CD8-positive, alpha-beta T cell (primary cell): ENCODE measurements at regions of chr1 and their contacts with region 1.

Region 1: GRCh38 chr1:29033829-29034466 is 89.8 kb downstream of the TMEM200B start:
- DNase-seq: peak in 2 of 9 experiments; percentile 47 to 65
- ATAC-seq: peak; percentile 71
- H3K4me3 ChIP-seq: no peak overlapping the region
- H3K4me3 Mint-ChIP-seq: no peak overlapping the region
- H3K27ac ChIP-seq: no peak overlapping the region
- H3K27ac Mint-ChIP-seq: no peak overlapping the region
- H3K4me1 ChIP-seq: no peaks in the 10 kb centered on the region
- H3K4me1 Mint-ChIP-seq: peaks cover 2% of the 10 kb centered on the region
- H3K27me3 ChIP-seq: no peaks in the 10 kb centered on the region
- H3K27me3 Mint-ChIP-seq: no peaks in the 10 kb centered on the region
- CTCF ChIP-seq: peak; percentile 71

Region 2: GRCh38 chr1:28789412-28789811 is 244.5 kb before region 1 on chr1:
- CTCF ChIA-PET with region 1: no interaction called
- POLR2A ChIA-PET with region 1: no interaction called
- intact Hi-C with region 1: loop called (anchors 1 to 5 kb)
- DNase-seq: no peak
- ATAC-seq: no peak
- H3K4me3 ChIP-seq: no peak overlapping the region
- H3K4me3 Mint-ChIP-seq: no peak overlapping the region
- H3K27ac ChIP-seq: no peak overlapping the region
- H3K27ac Mint-ChIP-seq: no peak overlapping the region
- H3K4me1 ChIP-seq: no peaks in the 10 kb centered on the region
- H3K4me1 Mint-ChIP-seq: peaks cover 7% of the 10 kb centered on the region
- H3K27me3 ChIP-seq: no peaks in the 10 kb centered on the region
- H3K27me3 Mint-ChIP-seq: peaks cover 7% of the 10 kb centered on the region
- CTCF ChIP-seq: no peak

Region 3: DNA sequence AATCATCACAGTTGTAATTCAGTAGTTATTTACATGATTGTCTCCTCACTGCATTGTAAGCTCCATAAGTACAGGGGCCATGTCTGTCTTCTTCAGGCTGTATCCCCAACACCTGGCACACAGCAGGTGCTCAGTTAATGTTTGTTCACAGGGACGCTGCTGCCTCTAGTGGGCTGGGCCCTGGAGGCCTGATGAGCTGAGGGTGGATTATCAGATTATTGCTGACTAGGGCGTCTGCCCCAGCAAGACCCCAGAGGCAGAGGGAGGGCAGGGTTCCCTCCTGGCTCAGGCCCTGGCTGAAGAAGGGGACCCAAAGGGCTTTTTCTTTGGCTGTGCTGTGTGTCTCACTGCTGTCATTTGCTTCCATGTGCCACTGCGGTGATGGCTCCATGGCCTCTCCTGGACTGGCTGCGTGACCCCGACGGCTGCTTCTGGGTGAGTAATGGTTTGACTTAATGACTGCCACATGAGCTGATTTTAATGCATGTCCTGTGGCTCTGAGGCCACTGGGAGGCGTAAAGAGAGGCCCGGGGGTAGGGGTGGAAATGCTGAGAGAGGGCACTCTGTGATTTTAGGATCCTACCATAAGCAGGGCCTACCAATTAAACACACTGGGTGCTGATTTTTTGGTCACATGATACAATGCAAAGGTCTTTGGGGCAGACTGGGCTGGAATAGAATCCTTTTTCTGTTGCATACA is 140.4 kb before region 1 on chr1:
- CTCF ChIA-PET with region 1: interaction called, 10 read pairs
- POLR2A ChIA-PET with region 1: no interaction called
- intact Hi-C with region 1: no loop called
- DNase-seq: peak in 4 of 9 experiments; percentile 32 to 43 (median 36)
- ATAC-seq: peak; percentile 73
- H3K4me3 ChIP-seq: no peak overlapping the region
- H3K4me3 Mint-ChIP-seq: no peak overlapping the region
- H3K27ac ChIP-seq: no peak overlapping the region
- H3K27ac Mint-ChIP-seq: no peak overlapping the region
- H3K4me1 ChIP-seq: no peaks in the 10 kb centered on the region
- H3K4me1 Mint-ChIP-seq: peaks cover 46% of the 10 kb centered on the region
- H3K27me3 ChIP-seq: no peaks in the 10 kb centered on the region
- H3K27me3 Mint-ChIP-seq: no peaks in the 10 kb centered on the region
- CTCF ChIP-seq: peak; percentile 29

Region 4: GRCh38 chr1:29011775-29012174 is 22.2 kb before region 1 on chr1:
- CTCF ChIA-PET with region 1: no interaction called
- POLR2A ChIA-PET with region 1: no interaction called
- intact Hi-C with region 1: no loop called
- DNase-seq: no peak
- ATAC-seq: no peak
- H3K4me3 ChIP-seq: no peak overlapping the region
- H3K4me3 Mint-ChIP-seq: no peak overlapping the region
- H3K27ac ChIP-seq: no peak overlapping the region
- H3K27ac Mint-ChIP-seq: peak overlapping the region; percentile 69
- H3K4me1 ChIP-seq: no peaks in the 10 kb centered on the region
- H3K4me1 Mint-ChIP-seq: peaks cover 18% of the 10 kb centered on the region
- H3K27me3 ChIP-seq: no peaks in the 10 kb centered on the region
- H3K27me3 Mint-ChIP-seq: no peaks in the 10 kb centered on the region
- CTCF ChIP-seq: no peak

Region 5: GRCh38 chr1:29171089-29171488 is 137.1 kb after region 1 on chr1:
- CTCF ChIA-PET with region 1: no interaction called
- POLR2A ChIA-PET with region 1: no interaction called
- intact Hi-C with region 1: no loop called
- DNase-seq: no peak
- ATAC-seq: no peak
- H3K4me3 ChIP-seq: no peak overlapping the region
- H3K4me3 Mint-ChIP-seq: peak overlapping the region; percentile 52
- H3K27ac ChIP-seq: no peak overlapping the region
- H3K27ac Mint-ChIP-seq: no peak overlapping the region
- H3K4me1 ChIP-seq: peaks cover 43% of the 10 kb centered on the region
- H3K4me1 Mint-ChIP-seq: peaks cover 67% of the 10 kb centered on the region
- H3K27me3 ChIP-seq: no peaks in the 10 kb centered on the region
- H3K27me3 Mint-ChIP-seq: no peaks in the 10 kb centered on the region
- CTCF ChIP-seq: no peak

Region 6: DNA sequence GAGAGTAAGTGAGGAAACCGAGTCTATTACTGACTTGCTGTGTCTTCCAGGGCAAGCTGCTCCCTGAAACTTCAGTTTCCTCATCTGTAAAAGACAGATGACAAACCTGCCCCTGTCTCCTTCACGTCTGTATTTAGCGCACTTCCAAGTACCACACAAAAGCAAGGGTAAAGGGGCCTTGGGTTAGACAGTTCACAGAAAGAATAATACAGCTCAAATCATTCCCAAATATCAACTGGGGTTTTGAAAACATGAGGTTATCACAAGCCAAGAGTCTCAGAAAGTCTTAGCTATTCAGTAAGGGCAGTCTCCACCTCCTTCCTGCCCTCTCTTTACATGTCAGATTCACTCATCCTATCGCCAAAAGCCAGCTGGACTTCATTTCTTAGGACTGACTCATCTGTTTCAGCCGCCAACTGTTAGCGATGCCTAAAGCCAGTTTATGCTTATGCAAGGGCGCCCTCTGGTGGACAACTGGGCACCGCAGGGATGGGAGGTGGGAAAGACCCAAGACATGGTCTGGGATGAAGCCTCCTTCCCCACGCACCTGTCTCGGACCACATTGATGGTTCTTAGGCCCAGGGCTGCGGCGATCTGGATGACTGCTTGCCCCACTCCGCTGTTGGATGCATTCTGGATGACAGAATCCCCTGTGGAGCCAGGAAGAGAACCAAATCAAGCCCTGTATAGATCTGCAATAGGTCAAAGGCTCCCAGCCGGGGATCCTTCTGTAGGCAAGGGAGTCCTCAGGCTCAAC is 168.8 kb after region 1 on chr1:
- CTCF ChIA-PET with region 1: interaction called, 11 read pairs
- POLR2A ChIA-PET with region 1: no interaction called
- intact Hi-C with region 1: loop called (anchors 5 kb)
- DNase-seq: peak; percentile 67 to 95 (median 87)
- ATAC-seq: peak; percentile 84
- H3K4me3 ChIP-seq: no peak overlapping the region
- H3K4me3 Mint-ChIP-seq: no peak overlapping the region
- H3K27ac ChIP-seq: no peak overlapping the region
- H3K27ac Mint-ChIP-seq: no peak overlapping the region
- H3K4me1 ChIP-seq: no peaks in the 10 kb centered on the region
- H3K4me1 Mint-ChIP-seq: no peaks in the 10 kb centered on the region
- H3K27me3 ChIP-seq: no peaks in the 10 kb centered on the region
- H3K27me3 Mint-ChIP-seq: no peaks in the 10 kb centered on the region
- CTCF ChIP-seq: peak; percentile 93